ENCODE measurements at regions of chr9 and their contacts with region 1.

Region 1: DNA sequence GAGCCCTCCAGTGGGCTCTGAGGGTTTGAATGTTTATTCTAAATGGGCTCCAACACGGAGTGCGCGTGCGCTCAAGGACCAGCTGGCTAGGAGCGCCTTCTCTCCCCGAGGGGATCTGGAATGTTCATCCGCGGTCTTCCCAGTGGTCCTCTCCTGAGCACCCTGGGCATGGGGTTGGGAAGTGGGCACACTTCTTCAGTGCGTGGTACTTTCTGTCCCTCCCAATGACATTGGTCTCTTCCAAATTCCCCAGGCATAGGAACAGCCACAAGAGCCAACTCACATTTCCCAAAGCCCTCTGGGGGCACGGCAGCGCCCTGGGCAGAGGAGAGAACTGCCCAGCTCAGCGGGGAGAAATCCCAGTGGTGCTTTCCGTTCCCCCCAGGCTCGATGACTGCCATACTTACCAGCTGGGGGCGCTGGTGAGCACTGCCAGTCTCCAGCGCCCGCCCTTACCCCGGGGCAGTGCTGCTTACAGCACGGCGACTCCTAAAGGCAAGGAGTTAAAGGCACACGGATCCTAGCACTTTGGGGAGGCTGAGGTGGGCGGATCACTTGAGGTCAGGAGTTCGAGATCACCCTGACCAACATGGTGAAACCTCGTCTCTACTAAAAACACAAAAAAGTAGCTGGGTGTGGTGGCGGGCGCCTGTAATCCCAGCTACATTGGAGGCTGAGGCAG is 29.9 kb upstream of the OBP2B start:
- DNase-seq: peak; percentile 79
- ATAC-seq: peak; percentile 60

Region 2: GRCh38 chr9:132894356-132895240 is 344.4 kb before region 1 on chr9:
- intact Hi-C with region 1: no loop called
- DNase-seq: no peak
- ATAC-seq: no peak

Region 3: GRCh38 chr9:133199648-133200321 is 39.2 kb before region 1 on chr9:
- intact Hi-C with region 1: loop called (anchors 5 kb)
- DNase-seq: no peak
- ATAC-seq: peak; percentile 56

Region 4: DNA sequence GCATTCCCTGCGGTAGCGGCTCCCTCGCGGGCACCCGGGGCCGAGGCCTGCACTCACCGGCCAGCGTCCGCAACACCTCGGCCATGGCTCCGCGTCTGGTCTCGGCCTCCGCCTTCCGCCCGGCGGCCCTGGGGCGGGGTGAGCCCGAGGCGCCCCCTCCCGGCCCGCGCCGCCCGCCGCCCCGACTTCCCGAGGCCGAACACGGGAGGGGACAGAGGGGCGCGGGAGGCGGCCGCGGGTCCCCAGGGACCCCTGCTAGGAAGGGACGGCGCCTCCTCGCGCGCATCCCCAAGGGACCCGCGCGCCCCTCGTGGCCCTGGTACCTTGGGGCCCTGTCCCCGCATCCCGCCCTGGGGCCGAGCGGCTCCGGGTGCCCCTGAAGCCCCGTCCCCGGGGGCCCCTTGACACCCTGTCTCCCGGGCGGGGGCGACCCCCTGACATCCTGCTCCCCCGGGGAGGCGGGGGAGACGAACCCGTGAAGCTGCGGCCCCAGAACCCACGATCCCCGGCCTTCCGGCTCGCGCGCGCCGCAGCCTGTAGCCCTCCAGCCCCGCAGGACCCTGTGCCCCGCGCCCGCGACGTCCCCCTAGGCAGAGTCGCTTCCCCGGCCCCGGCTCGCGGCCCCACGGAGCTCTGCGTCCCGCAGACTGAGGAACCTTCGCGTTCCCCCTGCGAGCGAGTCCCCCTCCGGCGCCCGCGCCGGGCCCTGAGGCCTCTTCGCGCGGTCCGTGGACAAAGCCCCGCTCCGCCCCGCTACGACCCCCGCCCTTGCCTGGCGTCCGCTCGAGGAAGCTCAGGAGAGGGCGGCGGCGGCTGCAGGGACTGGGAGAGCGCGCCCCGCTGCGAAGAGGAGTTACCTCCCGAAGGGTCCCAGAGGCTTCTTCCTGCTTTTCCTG is 36.4 kb after region 1 on chr9 and contains the start of gene ABO:
- intact Hi-C with region 1: loop called (anchors 5 kb)
- DNase-seq: no peak
- ATAC-seq: peak; percentile 67
- total RNA-seq, gene ABO: 1.5 TPM

Measured in Right ventricle myocardium inferior (tissue), 1 donor.